A549 (cell line): ENCODE measurements at regions of chr2 and their contacts with region 1.

Region 1: DNA sequence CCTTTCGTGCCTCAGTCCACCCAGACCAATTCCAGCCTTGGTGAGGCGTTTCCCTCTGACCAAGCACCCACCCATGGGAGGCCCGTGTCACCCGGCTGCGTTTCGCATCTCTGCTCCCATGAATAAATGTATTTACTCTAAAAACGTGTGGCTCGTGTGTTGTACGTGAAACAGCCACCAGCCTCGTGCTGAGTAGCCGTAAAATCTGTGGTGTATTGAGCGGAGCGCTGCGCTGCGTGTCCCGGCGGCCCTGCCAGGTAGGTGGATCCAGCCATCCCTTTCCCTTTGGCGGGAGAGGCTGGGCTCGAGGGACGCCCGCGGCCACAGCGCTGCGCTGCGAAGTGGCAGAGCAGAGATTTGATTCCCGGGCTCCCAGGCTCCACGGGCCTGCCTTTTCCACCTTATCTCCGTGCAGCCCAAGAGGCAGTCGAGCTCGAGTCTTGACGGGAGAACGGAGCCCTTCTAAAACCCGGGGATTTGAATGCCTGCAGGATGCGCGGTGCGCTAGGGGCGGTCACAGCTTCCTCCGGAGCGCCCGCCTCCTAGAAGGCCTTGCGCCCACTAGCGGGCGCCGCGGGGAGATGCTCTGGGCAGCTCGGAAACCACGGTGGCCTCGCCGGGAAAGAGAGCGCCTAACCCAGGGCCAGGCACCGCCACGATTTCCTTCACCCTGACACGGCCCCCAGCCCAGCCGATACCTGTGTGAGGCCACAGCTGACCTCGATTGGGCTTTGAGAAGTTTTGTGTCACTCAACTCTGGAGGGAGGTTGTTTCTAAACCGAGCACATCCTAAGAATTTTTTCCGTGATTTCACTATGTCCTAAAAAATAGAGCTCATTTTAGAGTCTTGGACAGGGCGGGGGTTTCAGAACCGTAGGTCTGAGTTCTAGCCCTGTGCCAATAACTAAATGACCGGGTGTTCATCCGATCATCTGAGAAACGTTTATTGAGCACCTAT is 3.9 kb upstream of the PSMD1 start:
- DNase-seq: peak; percentile 66 to 88
- ATAC-seq: peak; percentile 78 to 87
- H3K4me3 ChIP-seq: peak overlapping the region; percentile 58
- H3K27ac ChIP-seq: peak overlapping the region; percentile 72 to 81
- H3K4me1 ChIP-seq: peaks cover 38% of the 10 kb centered on the region
- CTCF ChIP-seq: peak; percentile 90
- EP300 ChIP-seq: no peak
- POLR2A ChIP-seq: no peak
- RAD21 ChIP-seq: peak; percentile 47 to 61; a peak in 4 of 5 replicates

Region 2: DNA sequence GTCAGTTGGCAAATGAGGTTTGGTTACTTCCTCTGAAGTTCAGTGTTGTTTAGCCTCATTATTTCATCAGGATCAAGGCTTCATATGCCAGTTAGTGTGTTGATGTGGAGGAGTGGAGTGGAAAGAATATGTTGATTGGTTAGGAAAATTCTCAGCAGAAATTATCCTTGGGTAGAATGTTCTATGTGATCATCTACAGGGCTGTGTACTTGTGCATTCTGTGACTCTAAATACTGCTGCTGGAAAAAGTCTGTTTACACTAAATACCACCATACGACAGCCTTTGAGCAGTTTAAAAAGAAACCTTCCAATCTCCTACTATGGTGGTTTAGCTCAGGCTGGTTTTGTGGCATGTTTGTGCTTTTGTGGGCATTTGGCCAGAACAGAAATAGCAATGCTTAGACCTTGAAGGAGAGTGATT is 314.4 kb before region 1 on chr2:
- CTCF ChIA-PET with region 1: no interaction called
- POLR2A ChIA-PET with region 1: no interaction called
- DNase-seq: no peak
- ATAC-seq: peak; percentile 43 to 63; a peak in 4 of 6 replicates
- H3K4me3 ChIP-seq: no peak overlapping the region
- H3K27ac ChIP-seq: peak overlapping the region in 1 of 2 experiments; percentile 3; a peak in 1 of 6 replicates
- H3K4me1 ChIP-seq: peaks cover 24% of the 10 kb centered on the region
- CTCF ChIP-seq: no peak
- EP300 ChIP-seq: no peak
- POLR2A ChIP-seq: no peak
- RAD21 ChIP-seq: no peak

Region 3: GRCh38 chr2:230824406-230824978 is 228.3 kb before region 1 on chr2:
- CTCF ChIA-PET with region 1: interaction called, 12 read pairs
- POLR2A ChIA-PET with region 1: no interaction called
- DNase-seq: peak; percentile 46 to 81
- ATAC-seq: peak; percentile 83 to 96
- H3K4me3 ChIP-seq: no peak overlapping the region
- H3K27ac ChIP-seq: 0 out of 6 replicates have a peak overlapping the region, but pooled peaks of 1 of the 2 experiments have one; percentile 24
- H3K4me1 ChIP-seq: no peaks in the 10 kb centered on the region
- CTCF ChIP-seq: peak; percentile 80
- EP300 ChIP-seq: no peak
- POLR2A ChIP-seq: no peak
- RAD21 ChIP-seq: peak; percentile 84 to 90

Region 4: GRCh38 chr2:231000211-231000904 is 52.4 kb before region 1 on chr2:
- CTCF ChIA-PET with region 1: interaction called, 16 read pairs
- POLR2A ChIA-PET with region 1: no interaction called
- DNase-seq: peak; percentile 48 to 49
- ATAC-seq: peak; percentile 83 to 90
- H3K4me3 ChIP-seq: no peak overlapping the region
- H3K27ac ChIP-seq: no peak overlapping the region
- H3K4me1 ChIP-seq: no peaks in the 10 kb centered on the region
- CTCF ChIP-seq: peak; percentile 30; the same call in 1 of the 3 replicates
- EP300 ChIP-seq: no peak
- POLR2A ChIP-seq: no peak
- RAD21 ChIP-seq: peak in 1 of 2 experiments; percentile 25; a peak in 1 of 5 replicates

Region 5: DNA sequence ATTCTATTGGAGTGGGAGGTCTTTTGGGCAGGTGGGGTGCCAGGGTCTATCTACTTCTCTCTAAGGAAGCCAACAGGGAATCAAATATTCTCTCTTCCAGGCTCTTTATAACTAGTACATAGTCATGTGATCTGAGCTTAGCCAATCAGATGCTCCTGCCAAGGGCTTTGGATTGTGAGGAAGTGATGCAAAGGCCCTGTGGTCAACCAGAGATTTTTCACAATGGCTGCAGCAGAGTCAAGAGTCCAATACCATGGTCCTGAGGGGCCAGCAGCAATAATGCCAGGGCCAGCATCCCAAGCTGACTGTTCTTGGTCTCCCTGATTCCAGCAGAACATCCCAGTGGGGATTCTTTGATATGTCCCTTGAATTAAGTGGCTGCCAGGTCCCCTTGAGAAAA is 23.9 kb before region 1 on chr2:
- CTCF ChIA-PET with region 1: interaction called, 17 read pairs
- POLR2A ChIA-PET with region 1: no interaction called
- DNase-seq: no peak
- ATAC-seq: no peak
- H3K4me3 ChIP-seq: no peak overlapping the region
- H3K27ac ChIP-seq: no peak overlapping the region
- H3K4me1 ChIP-seq: peaks cover 8% of the 10 kb centered on the region
- CTCF ChIP-seq: no peak
- EP300 ChIP-seq: no peak
- POLR2A ChIP-seq: no peak
- RAD21 ChIP-seq: no peak

Region 6: GRCh38 chr2:231037731-231038482 is 14.9 kb before region 1 on chr2:
- CTCF ChIA-PET with region 1: interaction called, 36 read pairs
- POLR2A ChIA-PET with region 1: interaction called, 3 read pairs
- DNase-seq: peak; percentile 31 to 48
- ATAC-seq: peak; percentile 81 to 88
- H3K4me3 ChIP-seq: peak overlapping the region; percentile 57
- H3K27ac ChIP-seq: peak overlapping the region; percentile 69 to 93
- H3K4me1 ChIP-seq: peaks cover 27% of the 10 kb centered on the region
- CTCF ChIP-seq: peak; percentile 40
- EP300 ChIP-seq: no peak
- POLR2A ChIP-seq: no peak
- RAD21 ChIP-seq: no peak

Region 7: GRCh38 chr2:231068525-231069222 is 15.9 kb after region 1 on chr2:
- CTCF ChIA-PET with region 1: interaction called, 15 read pairs
- POLR2A ChIA-PET with region 1: interaction called, 3 read pairs
- DNase-seq: peak; percentile 61 to 67
- ATAC-seq: peak; percentile 97 to 99
- H3K4me3 ChIP-seq: no peak overlapping the region
- H3K27ac ChIP-seq: peak overlapping the region; percentile 19 to 74; a peak in 4 of 6 replicates
- H3K4me1 ChIP-seq: peaks cover 23% of the 10 kb centered on the region
- CTCF ChIP-seq: no peak
- EP300 ChIP-seq: no peak
- POLR2A ChIP-seq: no peak
- RAD21 ChIP-seq: no peak

Region 8: DNA sequence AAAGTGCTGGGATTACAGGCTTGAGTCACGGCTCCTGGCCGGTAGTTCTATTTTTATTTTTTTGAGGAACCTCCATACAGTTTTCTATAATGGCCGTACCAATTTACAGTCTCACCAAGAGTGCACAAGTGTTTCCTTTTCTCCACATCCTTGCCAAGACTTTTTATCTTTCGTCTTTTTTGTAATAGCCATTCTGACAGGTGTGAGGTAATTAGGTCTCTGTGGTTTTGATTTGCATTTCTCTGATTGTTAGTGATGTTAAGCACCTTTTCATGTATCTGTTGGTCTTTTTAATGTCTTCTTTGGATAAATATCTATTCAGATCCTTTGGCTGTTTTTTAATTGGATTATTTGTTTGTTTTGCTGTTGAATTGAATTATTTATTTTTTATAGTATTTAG is 155.0 kb after region 1 on chr2:
- CTCF ChIA-PET with region 1: no interaction called
- POLR2A ChIA-PET with region 1: no interaction called
- DNase-seq: no peak
- ATAC-seq: no peak
- H3K4me3 ChIP-seq: no peak overlapping the region
- H3K27ac ChIP-seq: no peak overlapping the region
- H3K4me1 ChIP-seq: no peaks in the 10 kb centered on the region
- CTCF ChIP-seq: no peak
- EP300 ChIP-seq: no peak
- POLR2A ChIP-seq: no peak
- RAD21 ChIP-seq: no peak